ENCODE measurements at regions of chr20 and their contacts with region 1.

Region 1: GRCh38 chr20:57498425-57499400 is 26.2 kb downstream of the CTCFL start:
- DNase-seq: no peak
- ATAC-seq: peak; percentile 80
- H3K4me3 Mint-ChIP-seq: no peak overlapping the region
- H3K27ac Mint-ChIP-seq: peak overlapping the region; percentile 36
- H3K4me1 Mint-ChIP-seq: peaks cover 34% of the 10 kb centered on the region
- H3K27me3 Mint-ChIP-seq: no peaks in the 10 kb centered on the region
- CTCF ChIP-seq: no peak

Region 2: GRCh38 chr20:57089691-57090150 is 409.0 kb before region 1 on chr20:
- CTCF ChIA-PET with region 1: no interaction called
- POLR2A ChIA-PET with region 1: no interaction called
- intact Hi-C with region 1: loop called (anchors 5 kb)
- DNase-seq: peak; percentile 31
- ATAC-seq: peak; percentile 47
- H3K4me3 Mint-ChIP-seq: no peak overlapping the region
- H3K27ac Mint-ChIP-seq: no peak overlapping the region
- H3K4me1 Mint-ChIP-seq: peaks cover 4% of the 10 kb centered on the region
- H3K27me3 Mint-ChIP-seq: peaks cover 7% of the 10 kb centered on the region
- CTCF ChIP-seq: no peak

Region 3: GRCh38 chr20:57398231-57398821 is 100.4 kb before region 1 on chr20:
- CTCF ChIA-PET with region 1: interaction called, 13 read pairs
- POLR2A ChIA-PET with region 1: interaction called, 8 read pairs
- intact Hi-C with region 1: loop called (anchors 1 kb)
- DNase-seq: peak; percentile 78
- ATAC-seq: peak; percentile 64
- H3K4me3 Mint-ChIP-seq: peak overlapping the region; percentile 78
- H3K27ac Mint-ChIP-seq: peak overlapping the region; percentile 97
- H3K4me1 Mint-ChIP-seq: peaks cover 100% of the 10 kb centered on the region
- H3K27me3 Mint-ChIP-seq: no peaks in the 10 kb centered on the region
- CTCF ChIP-seq: no peak

Region 4: GRCh38 chr20:57450419-57450818 is 48.3 kb before region 1 on chr20:
- CTCF ChIA-PET with region 1: interaction called, 5 read pairs
- POLR2A ChIA-PET with region 1: no interaction called
- intact Hi-C with region 1: loop called (anchors 1 kb)
- DNase-seq: peak; percentile 32
- ATAC-seq: peak; percentile 78
- H3K4me3 Mint-ChIP-seq: peak overlapping the region; percentile 69
- H3K27ac Mint-ChIP-seq: peak overlapping the region; percentile 63
- H3K4me1 Mint-ChIP-seq: peaks cover 65% of the 10 kb centered on the region
- H3K27me3 Mint-ChIP-seq: no peaks in the 10 kb centered on the region
- CTCF ChIP-seq: no peak

Region 5: DNA sequence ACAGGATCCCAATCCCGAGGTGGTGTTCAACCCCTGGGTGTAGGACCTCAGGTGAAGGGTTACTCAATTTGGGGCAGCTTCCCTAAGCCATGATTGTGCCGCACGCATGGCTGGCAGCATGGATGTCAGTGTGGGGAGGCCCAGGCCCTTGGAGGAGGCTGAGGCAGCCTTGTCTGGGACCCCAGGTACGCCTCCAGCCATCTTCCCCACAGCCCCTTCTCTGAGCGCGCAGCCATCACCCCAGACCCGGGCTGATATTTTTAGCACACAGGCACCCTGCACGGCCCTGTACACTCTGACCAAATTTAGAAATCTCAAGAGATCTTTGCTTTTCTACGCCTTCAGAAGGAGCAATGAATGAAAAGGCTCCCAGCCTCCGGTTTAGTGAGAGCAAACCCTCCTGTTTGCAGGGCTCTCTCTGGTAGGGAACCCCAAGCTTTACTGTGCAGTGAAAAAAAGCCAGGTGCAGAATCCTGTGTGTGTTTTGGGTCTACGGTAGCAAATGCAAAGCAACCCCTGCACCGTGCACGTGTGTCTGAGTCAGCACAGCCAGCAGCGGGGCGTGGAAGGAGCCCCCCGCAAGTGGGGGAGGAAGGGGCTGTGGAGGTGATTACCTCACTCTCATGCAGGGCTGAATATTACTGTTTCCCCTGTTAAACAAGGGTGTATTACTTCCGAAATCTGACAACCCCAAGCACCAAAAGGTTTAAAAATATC is 18.1 kb before region 1 on chr20:
- CTCF ChIA-PET with region 1: interaction called, 8 read pairs
- POLR2A ChIA-PET with region 1: interaction called, 5 read pairs
- intact Hi-C with region 1: loop called (anchors 1 kb)
- DNase-seq: peak; percentile 64
- ATAC-seq: peak; percentile 69
- H3K4me3 Mint-ChIP-seq: peak overlapping the region; percentile 73
- H3K27ac Mint-ChIP-seq: peak overlapping the region; percentile 81
- H3K4me1 Mint-ChIP-seq: peaks cover 82% of the 10 kb centered on the region
- H3K27me3 Mint-ChIP-seq: no peaks in the 10 kb centered on the region
- CTCF ChIP-seq: no peak

Region 6: GRCh38 chr20:57661199-57662027 is 162.7 kb after region 1 on chr20:
- CTCF ChIA-PET with region 1: no interaction called
- POLR2A ChIA-PET with region 1: no interaction called
- intact Hi-C with region 1: no loop called
- DNase-seq: peak; percentile 10
- ATAC-seq: no peak
- H3K4me3 Mint-ChIP-seq: no peak overlapping the region
- H3K27ac Mint-ChIP-seq: no peak overlapping the region
- H3K4me1 Mint-ChIP-seq: peaks cover 32% of the 10 kb centered on the region
- H3K27me3 Mint-ChIP-seq: no peaks in the 10 kb centered on the region
- CTCF ChIP-seq: no peak

Region 7: GRCh38 chr20:58179432-58180099 is 680.9 kb after region 1 on chr20:
- CTCF ChIA-PET with region 1: interaction called, 3 read pairs
- POLR2A ChIA-PET with region 1: no interaction called
- intact Hi-C with region 1: loop called (anchors 1 kb)
- DNase-seq: peak; percentile 75
- ATAC-seq: peak; percentile 96
- H3K4me3 Mint-ChIP-seq: no peak overlapping the region
- H3K27ac Mint-ChIP-seq: no peak overlapping the region
- H3K4me1 Mint-ChIP-seq: peaks cover 9% of the 10 kb centered on the region
- H3K27me3 Mint-ChIP-seq: peaks cover 36% of the 10 kb centered on the region
- CTCF ChIP-seq: peak; percentile 94